ENCODE measurements at regions of chr1 and their contacts with region 1.

Region 1: DNA sequence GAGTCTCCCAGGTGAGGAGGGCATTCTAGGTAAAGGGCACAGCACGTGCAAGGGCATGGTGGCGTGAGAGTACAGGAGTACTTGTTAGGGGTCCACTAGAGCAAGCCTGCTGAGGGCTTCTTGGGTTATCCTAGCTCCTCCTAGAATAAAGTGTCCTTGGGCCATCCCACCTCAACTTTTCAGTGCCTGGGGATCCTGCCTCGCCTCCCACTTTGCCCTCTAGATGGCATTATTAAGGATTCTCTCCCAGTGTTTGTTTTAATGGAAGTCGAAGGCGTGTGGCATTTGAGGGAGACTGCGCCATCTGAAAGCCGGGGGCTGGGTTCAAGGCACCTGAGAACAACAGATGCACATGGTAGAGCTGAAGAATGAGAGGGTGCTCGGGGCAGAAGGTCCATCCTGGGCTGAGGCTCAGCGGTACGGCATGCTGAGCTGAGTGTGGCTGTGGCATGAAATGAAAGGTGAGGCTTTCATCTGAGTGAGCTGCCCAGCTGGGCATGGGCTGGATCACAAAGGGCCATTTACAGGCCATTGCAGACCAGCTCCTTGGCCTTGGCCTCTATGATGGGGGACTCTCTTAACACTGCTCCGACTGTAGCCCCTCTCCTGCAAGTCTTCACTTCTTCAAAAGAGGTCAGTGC is 74.4 kb upstream of the SELENON start:
- DNase-seq: no peak
- ATAC-seq: peak; percentile 63
- H3K4me3 ChIP-seq: no peak overlapping the region
- H3K27ac ChIP-seq: no peak overlapping the region
- H3K4me1 ChIP-seq: no peaks in the 10 kb centered on the region
- H3K27me3 ChIP-seq: no peaks in the 10 kb centered on the region
- CTCF ChIP-seq: peak; percentile 20 to 34 (median 30); a peak in 5 of 6 replicates
- POLR2A ChIP-seq: no peak
- RAD21 ChIP-seq: peak; percentile 23; the same call in 1 of the 2 replicates

Region 2: DNA sequence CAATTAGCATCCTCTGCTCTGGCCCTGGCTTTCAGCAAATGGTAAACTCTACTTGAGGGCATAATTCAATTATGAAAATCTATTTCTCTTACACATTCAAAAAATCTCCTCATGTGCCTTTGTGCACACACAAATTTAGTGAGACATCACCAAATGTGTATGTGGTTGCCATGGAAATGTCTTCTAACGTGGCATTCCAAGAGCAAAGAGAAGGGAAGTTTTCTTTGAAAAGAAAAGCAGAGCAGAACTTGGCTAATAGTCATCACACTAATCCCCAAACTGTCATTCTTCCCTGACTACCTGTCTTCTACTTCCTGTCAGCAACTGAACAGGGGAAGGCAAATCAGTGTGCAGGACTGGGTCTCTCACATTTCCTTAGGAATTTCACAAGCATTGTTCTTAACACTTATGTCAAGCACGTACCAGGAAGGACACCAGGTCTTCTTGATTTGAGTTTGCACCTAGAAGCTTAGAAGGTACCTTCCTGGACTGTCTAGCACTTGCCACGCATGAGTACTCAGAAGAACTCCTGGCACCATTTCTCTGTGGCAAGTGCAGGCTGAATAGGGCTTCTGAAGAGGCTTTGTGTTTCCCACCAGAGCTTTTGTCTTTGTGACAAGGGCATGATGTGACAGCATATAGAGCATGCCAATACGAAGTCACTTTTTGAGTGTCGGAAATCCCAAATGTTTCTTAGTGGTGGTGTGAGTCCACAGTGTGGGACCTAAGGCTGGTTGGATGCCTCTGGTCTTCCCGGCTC is 76.7 kb before region 1 on chr1:
- CTCF ChIA-PET with region 1: no interaction called
- POLR2A ChIA-PET with region 1: no interaction called
- RAD21 ChIA-PET with region 1: no interaction called
- intact Hi-C with region 1: no loop called
- DNase-seq: no peak
- ATAC-seq: no peak
- H3K4me3 ChIP-seq: no peak overlapping the region
- H3K27ac ChIP-seq: no peak overlapping the region
- H3K4me1 ChIP-seq: no peaks in the 10 kb centered on the region
- H3K27me3 ChIP-seq: peaks cover 7% of the 10 kb centered on the region; the same call in 1 of the 2 replicates
- CTCF ChIP-seq: no peak
- POLR2A ChIP-seq: no peak
- RAD21 ChIP-seq: no peak

Region 3: GRCh38 chr1:25664357-25665199 is 61.0 kb before region 1 on chr1:
- CTCF ChIA-PET with region 1: no interaction called
- POLR2A ChIA-PET with region 1: no interaction called
- RAD21 ChIA-PET with region 1: no interaction called
- intact Hi-C with region 1: no loop called
- DNase-seq: no peak
- ATAC-seq: no peak
- H3K4me3 ChIP-seq: no peak overlapping the region
- H3K27ac ChIP-seq: no peak overlapping the region
- H3K4me1 ChIP-seq: no peaks in the 10 kb centered on the region
- H3K27me3 ChIP-seq: no peaks in the 10 kb centered on the region
- CTCF ChIP-seq: no peak
- POLR2A ChIP-seq: no peak
- RAD21 ChIP-seq: no peak

Region 4: GRCh38 chr1:25711555-25712298 is 13.9 kb before region 1 on chr1:
- CTCF ChIA-PET with region 1: interaction called, 10 read pairs
- POLR2A ChIA-PET with region 1: interaction called, 3 read pairs
- RAD21 ChIA-PET with region 1: no interaction called
- intact Hi-C with region 1: no loop called
- DNase-seq: no peak
- ATAC-seq: no peak
- H3K4me3 ChIP-seq: no peak overlapping the region
- H3K27ac ChIP-seq: no peak overlapping the region
- H3K4me1 ChIP-seq: peaks cover 6 to 26% of the 10 kb centered on the region in 2 experiments; a peak in 3 of 4 replicates
- H3K27me3 ChIP-seq: no peaks in the 10 kb centered on the region
- CTCF ChIP-seq: no peak
- POLR2A ChIP-seq: no peak
- RAD21 ChIP-seq: no peak

Measured in HCT116 (cell line).